ENCODE measurements at regions of chr3 and their contacts with region 1.

Region 1: GRCh38 chr3:17162116-17162515 is 277.4 kb downstream of the PLCL2 start:
- DNase-seq: no peak
- ATAC-seq: no peak
- H3K4me3 ChIP-seq: no peak overlapping the region
- H3K4me3 Mint-ChIP-seq: no peak overlapping the region
- H3K27ac ChIP-seq: no peak overlapping the region
- H3K27ac Mint-ChIP-seq: no peak overlapping the region
- H3K4me1 ChIP-seq: peaks cover 8% of the 10 kb centered on the region
- H3K4me1 Mint-ChIP-seq: peaks cover 10% of the 10 kb centered on the region
- H3K27me3 ChIP-seq: no peaks in the 10 kb centered on the region
- H3K27me3 Mint-ChIP-seq: no peaks in the 10 kb centered on the region
- CTCF ChIP-seq: no peak

Region 2: GRCh38 chr3:15647611-15648167 is 1514.4 kb before region 1 on chr3:
- CTCF ChIA-PET with region 1: no interaction called
- POLR2A ChIA-PET with region 1: no interaction called
- intact Hi-C with region 1: loop called in 1 of 2 experiments (anchors 5 kb)
- DNase-seq: peak; percentile 6 to 81 (median 55)
- ATAC-seq: peak; percentile 84
- H3K4me3 ChIP-seq: peak overlapping the region; percentile 7
- H3K4me3 Mint-ChIP-seq: peak overlapping the region; percentile 74
- H3K27ac ChIP-seq: no peak overlapping the region
- H3K27ac Mint-ChIP-seq: peak overlapping the region; percentile 62
- H3K4me1 ChIP-seq: peaks cover 43% of the 10 kb centered on the region
- H3K4me1 Mint-ChIP-seq: peaks cover 51% of the 10 kb centered on the region
- H3K27me3 ChIP-seq: no peaks in the 10 kb centered on the region
- H3K27me3 Mint-ChIP-seq: peaks cover 10% of the 10 kb centered on the region
- CTCF ChIP-seq: no peak

Region 3: GRCh38 chr3:16311960-16312451 is 850.1 kb before region 1 on chr3:
- CTCF ChIA-PET with region 1: no interaction called
- POLR2A ChIA-PET with region 1: no interaction called
- intact Hi-C with region 1: no loop called
- DNase-seq: peak in 8 of 9 experiments; percentile 37 to 86 (median 62)
- ATAC-seq: peak; percentile 51
- H3K4me3 ChIP-seq: peak overlapping the region in 1 of 2 experiments; percentile 23
- H3K4me3 Mint-ChIP-seq: peak overlapping the region; percentile 68
- H3K27ac ChIP-seq: peak overlapping the region; percentile 46 to 67
- H3K27ac Mint-ChIP-seq: peak overlapping the region; percentile 95
- H3K4me1 ChIP-seq: peaks cover 94% of the 10 kb centered on the region
- H3K4me1 Mint-ChIP-seq: peaks cover 92% of the 10 kb centered on the region
- H3K27me3 ChIP-seq: no peaks in the 10 kb centered on the region
- H3K27me3 Mint-ChIP-seq: no peaks in the 10 kb centered on the region
- CTCF ChIP-seq: no peak